CD4-positive, alpha-beta memory T cell (primary cell): ENCODE measurements at regions of chr6 and their contacts with region 1.

Region 1: GRCh38 chr6:99425647-99426453 is 742 bp upstream of the PNISR start:
- DNase-seq: peak in 2 of 5 donors; percentile 59 to 70
- H3K4me3 ChIP-seq: peak overlapping the region; percentile 95 to 98
- H3K4me3 Mint-ChIP-seq: peak overlapping the region; percentile 97 to 100 (median 98)
- H3K27ac ChIP-seq: peak overlapping the region; percentile 96
- H3K27ac Mint-ChIP-seq: peak overlapping the region; percentile 97 to 100 (median 99)
- H3K4me1 ChIP-seq: peaks cover 56% of the 10 kb centered on the region
- H3K4me1 Mint-ChIP-seq: peaks cover 43 to 67% (median 53%) of the 10 kb centered on the region in 4 donors
- H3K27me3 ChIP-seq: no peaks in the 10 kb centered on the region
- H3K27me3 Mint-ChIP-seq: no peaks in the 10 kb centered on the region

Region 2: GRCh38 chr6:99349171-99350141 is 76.4 kb before region 1 on chr6 and contains the start of gene FAXC:
- CTCF ChIA-PET with region 1: no interaction called
- POLR2A ChIA-PET with region 1: no interaction called
- intact Hi-C with region 1: no loop called
- DNase-seq: no peak
- H3K4me3 ChIP-seq: no peak within 1 kb of the TSS
- H3K4me3 Mint-ChIP-seq: peak within 1 kb of the TSS in 7 of 8 donors; percentile 15 to 69 (median 48)
- H3K27ac ChIP-seq: no peak within 1 kb of the TSS
- H3K27ac Mint-ChIP-seq: no peak within 1 kb of the TSS
- H3K4me1 ChIP-seq: no peaks in the 10 kb centered on the region
- H3K4me1 Mint-ChIP-seq: peaks cover 0 to 5% (median under 1%) of the 10 kb centered on the region in 4 donors
- H3K27me3 ChIP-seq: peaks cover 12% of the 10 kb centered on the region
- H3K27me3 Mint-ChIP-seq: peaks cover 32 to 48% of the 10 kb centered on the region in 2 donors
- total RNA-seq, gene FAXC: not detected

Region 3: DNA sequence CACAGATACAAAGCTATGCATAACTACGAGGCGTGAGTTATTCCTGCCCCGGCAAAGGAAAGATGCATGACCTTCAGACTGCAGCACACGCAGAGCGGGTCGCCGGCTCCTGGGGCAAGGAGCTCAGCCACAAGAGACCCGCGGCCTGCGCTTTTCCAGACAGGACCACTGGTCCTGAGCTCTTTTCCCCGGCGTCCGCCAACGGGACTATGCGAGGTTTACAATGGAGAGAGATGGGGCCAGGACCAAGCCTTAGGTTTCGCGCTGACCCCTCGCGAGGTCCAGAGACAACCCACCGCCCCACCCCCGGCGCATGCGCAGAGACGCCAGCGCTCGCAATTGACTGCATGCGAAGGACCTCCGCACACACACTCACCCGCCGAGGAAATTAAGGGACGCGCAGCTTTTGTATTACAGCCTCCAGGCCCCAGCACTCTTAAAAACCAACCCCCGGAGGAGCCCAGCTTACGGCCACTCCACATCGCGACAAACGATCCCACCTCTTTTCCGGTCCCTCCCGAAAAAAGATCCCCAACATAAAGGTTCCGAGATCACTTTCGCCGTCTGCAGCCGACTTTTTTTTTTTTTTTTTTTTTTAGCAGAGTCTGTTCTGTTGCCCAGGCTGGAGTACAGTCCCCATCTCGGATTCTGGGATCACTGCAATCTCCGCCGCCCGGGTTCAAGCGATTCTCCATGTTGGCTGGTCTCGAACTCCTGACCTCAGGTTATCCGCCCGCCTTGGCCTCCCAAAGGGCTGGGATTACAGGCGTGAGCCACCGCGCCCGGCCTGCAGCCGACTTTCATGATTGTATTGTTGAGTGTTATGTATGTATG is 31.9 kb before region 1 on chr6 and contains the start of gene COQ3:
- CTCF ChIA-PET with region 1: interaction called, 6 read pairs
- POLR2A ChIA-PET with region 1: interaction called, 36 read pairs
- intact Hi-C with region 1: loop called (anchors 1 kb)
- DNase-seq: peak; percentile 53 to 69 (median 59)
- H3K4me3 ChIP-seq: peak within 1 kb of the TSS; percentile 45 to 78
- H3K4me3 Mint-ChIP-seq: peak within 1 kb of the TSS; percentile 94 to 97 (median 96)
- H3K27ac ChIP-seq: peak within 1 kb of the TSS; percentile 46
- H3K27ac Mint-ChIP-seq: peak within 1 kb of the TSS; percentile 79 to 97 (median 93)
- H3K4me1 ChIP-seq: peaks cover 5% of the 10 kb centered on the region
- H3K4me1 Mint-ChIP-seq: peaks cover 8 to 27% (median 19%) of the 10 kb centered on the region in 4 donors
- H3K27me3 ChIP-seq: no peaks in the 10 kb centered on the region
- H3K27me3 Mint-ChIP-seq: no peaks in the 10 kb centered on the region
- total RNA-seq, gene COQ3: 3.1 to 4.4 TPM

Region 4: DNA sequence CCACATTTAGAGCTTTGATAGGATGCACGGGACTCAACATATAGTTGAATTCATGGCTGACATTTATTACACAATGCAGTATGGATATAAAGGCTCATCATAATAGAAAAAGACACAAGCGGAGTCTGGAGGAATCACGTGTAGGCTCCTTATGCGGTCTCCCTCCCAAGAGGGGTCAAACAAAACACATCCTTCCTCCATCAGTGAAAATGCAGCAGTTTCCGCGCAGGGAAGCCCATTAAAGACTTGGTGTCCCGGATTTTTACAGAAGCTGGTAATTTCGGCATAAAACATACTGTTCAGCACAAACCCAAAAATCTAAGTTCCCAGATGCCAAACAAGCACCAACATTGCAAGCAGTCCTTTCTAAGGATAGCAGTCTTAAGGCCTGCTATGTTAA is 88.2 kb after region 1 on chr6:
- CTCF ChIA-PET with region 1: no interaction called
- POLR2A ChIA-PET with region 1: interaction called, 5 read pairs
- intact Hi-C with region 1: loop called (anchors 1 kb)
- DNase-seq: no peak
- H3K4me3 ChIP-seq: no peak overlapping the region
- H3K4me3 Mint-ChIP-seq: peak overlapping the region; percentile 66 to 97 (median 96)
- H3K27ac ChIP-seq: no peak overlapping the region
- H3K27ac Mint-ChIP-seq: peak overlapping the region in 5 of 7 donors; percentile 64 to 94 (median 70)
- H3K4me1 ChIP-seq: peaks cover 17% of the 10 kb centered on the region
- H3K4me1 Mint-ChIP-seq: peaks cover 17 to 39% (median 27%) of the 10 kb centered on the region in 4 donors
- H3K27me3 ChIP-seq: no peaks in the 10 kb centered on the region
- H3K27me3 Mint-ChIP-seq: no peaks in the 10 kb centered on the region

Region 5: DNA sequence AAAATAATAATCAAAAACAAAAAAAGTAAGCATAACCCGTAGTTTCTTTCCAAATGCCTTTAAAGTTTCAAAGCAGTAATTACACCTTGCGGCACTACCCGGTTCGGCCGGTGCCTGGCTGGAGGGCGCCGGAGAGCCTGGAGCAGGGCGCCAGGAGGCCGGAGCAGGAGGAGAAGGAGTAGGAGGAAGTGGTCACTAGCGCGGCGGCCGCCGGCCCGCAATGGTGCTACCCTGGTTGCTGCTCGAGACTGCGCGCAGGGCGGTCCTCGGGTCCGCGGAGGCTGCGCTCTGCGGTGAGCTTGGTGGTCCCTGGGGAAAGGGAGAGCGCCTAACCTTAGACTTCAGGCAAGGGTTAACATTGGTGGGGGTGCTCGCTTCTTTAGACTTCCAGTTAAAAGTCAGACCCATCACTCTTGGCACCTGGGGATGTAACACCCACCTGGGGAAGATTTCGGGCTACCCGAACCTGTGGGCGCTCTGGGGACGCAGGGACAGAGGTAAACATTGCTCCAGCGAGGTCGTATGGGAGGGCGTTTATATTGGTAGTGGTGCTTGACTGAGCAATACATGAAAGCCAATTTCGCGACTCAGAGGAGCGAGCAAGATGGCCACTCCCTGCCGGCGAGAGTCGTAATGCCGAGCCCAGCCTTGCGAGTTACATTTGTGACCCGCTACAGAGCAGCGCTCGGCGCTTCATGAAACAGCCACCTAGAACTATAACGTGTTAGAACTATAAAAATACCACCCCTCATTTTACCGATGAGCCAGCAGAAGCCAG is 95.2 kb after region 1 on chr6:
- CTCF ChIA-PET with region 1: interaction called, 4 read pairs
- POLR2A ChIA-PET with region 1: interaction called, 4 read pairs
- intact Hi-C with region 1: loop called (anchors 1 kb)
- DNase-seq: peak; percentile 66 to 79 (median 71)
- H3K4me3 ChIP-seq: peak overlapping the region; percentile 87 to 99
- H3K4me3 Mint-ChIP-seq: peak overlapping the region; percentile 92 to 99 (median 98)
- H3K27ac ChIP-seq: peak overlapping the region; percentile 64
- H3K27ac Mint-ChIP-seq: peak overlapping the region; percentile 67 to 97 (median 96)
- H3K4me1 ChIP-seq: peaks cover 23% of the 10 kb centered on the region
- H3K4me1 Mint-ChIP-seq: peaks cover 8 to 31% (median 24%) of the 10 kb centered on the region in 4 donors
- H3K27me3 ChIP-seq: no peaks in the 10 kb centered on the region
- H3K27me3 Mint-ChIP-seq: no peaks in the 10 kb centered on the region

Region 6: DNA sequence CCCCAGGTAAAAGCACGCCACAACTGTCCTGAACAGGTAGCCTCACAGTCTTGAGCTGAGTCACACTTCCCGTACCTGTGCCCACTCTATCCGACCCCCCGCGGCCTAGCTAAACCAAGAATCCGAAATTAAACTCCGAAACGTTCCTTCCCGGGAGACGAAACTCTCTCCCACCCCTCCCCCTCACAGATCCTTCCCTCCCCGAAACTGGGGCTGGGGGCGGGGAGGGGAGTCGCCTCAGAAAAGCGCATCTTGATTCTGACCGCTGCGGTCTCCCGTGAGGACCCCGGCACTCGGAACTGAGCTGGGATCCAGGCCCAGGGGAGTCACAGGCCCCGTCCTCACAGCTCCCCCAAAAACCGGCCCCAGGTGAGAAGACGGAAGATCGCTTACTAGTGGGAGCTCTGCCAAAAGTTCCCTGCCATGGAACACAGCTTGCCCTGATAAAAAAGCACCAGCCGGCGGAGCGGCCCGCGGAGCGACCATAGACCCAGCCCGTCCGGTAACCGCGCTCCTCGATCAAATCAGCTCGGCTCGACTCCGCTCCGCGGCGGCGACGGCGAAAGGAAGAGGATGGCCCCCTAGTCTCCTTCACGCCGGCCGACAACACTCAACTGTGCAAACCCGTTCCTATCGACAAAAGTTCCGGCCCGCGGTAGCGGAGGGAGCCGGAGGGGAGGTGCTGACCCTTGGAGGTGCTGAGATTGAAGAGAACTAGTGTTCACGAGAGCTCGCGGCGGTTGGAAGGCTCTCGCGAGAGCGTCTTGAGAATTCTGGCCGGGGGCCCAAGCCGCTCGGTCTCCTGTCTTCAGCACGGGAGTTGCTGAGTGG is 142.5 kb after region 1 on chr6 and contains the start of gene CCNC:
- CTCF ChIA-PET with region 1: interaction called, 5 read pairs
- POLR2A ChIA-PET with region 1: interaction called, 25 read pairs
- intact Hi-C with region 1: loop called (anchors 1 kb)
- DNase-seq: peak; percentile 87 to 89 (median 88)
- H3K4me3 ChIP-seq: peak within 1 kb of the TSS; percentile 79 to 86
- H3K4me3 Mint-ChIP-seq: peak within 1 kb of the TSS; percentile 93 to 100 (median 99)
- H3K27ac ChIP-seq: peak within 1 kb of the TSS; percentile 78
- H3K27ac Mint-ChIP-seq: peak within 1 kb of the TSS; percentile 88 to 98 (median 95)
- H3K4me1 ChIP-seq: peaks cover 24% of the 10 kb centered on the region
- H3K4me1 Mint-ChIP-seq: peaks cover 25 to 53% (median 31%) of the 10 kb centered on the region in 4 donors
- H3K27me3 ChIP-seq: no peaks in the 10 kb centered on the region
- H3K27me3 Mint-ChIP-seq: no peaks in the 10 kb centered on the region
- total RNA-seq, gene CCNC: 41.3 to 42.7 TPM